Activated T-helper 2 cell treated with anti-CD3 and anti-CD28 coated beads, Interferon-gamma antibody, Interleukin-2, Interleukin-4, amounts not matched to agents 10 μg/mL and 5 μg/mL and 100 μg/mL, durations not matched to agents 14 hours and 24 hours and 36 hours (primary cell): ENCODE measurements at regions of chr6 and their contacts with region 1.

Region 1: DNA sequence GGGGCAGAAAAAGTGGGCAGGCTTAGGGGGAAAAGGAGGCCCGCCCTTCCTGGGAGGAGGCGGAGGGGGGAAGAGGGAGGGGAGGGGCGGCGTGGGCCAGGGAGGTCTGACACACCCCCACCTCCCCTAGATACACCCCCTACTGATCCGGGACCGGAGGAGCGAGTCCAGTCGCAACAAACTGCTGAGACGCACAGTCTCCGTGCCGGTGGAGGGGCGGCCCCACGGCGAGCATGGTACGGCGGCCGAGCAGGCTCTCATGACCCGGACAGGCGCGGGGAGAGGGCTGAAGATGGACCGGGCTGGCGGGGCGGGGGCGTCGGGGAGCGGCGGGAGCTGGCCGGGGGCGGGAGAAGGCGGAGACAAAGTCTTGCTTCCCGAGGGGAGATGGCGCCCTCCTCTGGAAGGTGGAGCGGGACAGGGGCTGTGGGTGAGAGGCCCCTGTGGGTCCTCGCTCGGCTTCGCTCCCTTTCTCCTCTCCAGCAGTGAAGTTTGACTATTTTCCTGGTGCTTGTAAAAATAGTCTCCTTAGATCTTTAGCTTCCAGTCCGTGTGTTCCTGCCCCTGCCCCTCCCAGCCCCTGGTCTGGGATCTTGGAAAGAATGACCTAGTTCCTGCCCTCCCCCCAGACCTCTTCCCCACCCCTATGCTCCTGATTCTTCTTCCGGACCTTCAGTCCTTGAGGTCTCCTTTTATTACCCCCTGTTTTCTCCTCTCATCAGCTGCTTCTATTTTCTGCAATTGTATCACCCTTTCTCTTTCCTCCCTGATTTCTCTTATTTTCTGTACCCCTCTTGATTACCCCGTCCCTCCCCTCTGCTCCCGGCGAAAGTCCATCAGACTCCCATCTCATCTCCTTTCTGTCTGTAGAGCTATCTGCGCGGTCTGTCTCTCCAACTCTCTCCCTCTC is 6.1 kb downstream of the SYNGAP1 start:
- DNase-seq: peak; percentile 73
- H3K4me3 Mint-ChIP-seq: peak overlapping the region; percentile 88
- H3K27ac Mint-ChIP-seq: peak overlapping the region; percentile 90
- H3K4me1 Mint-ChIP-seq: peaks cover 77% of the 10 kb centered on the region
- H3K27me3 Mint-ChIP-seq: no peaks in the 10 kb centered on the region

Region 2: GRCh38 chr6:32382757-32383156 is 1043.2 kb before region 1 on chr6:
- intact Hi-C with region 1: no loop called
- DNase-seq: no peak
- H3K4me3 Mint-ChIP-seq: no peak overlapping the region
- H3K27ac Mint-ChIP-seq: no peak overlapping the region
- H3K4me1 Mint-ChIP-seq: no peaks in the 10 kb centered on the region
- H3K27me3 Mint-ChIP-seq: peaks cover 30% of the 10 kb centered on the region

Region 3: DNA sequence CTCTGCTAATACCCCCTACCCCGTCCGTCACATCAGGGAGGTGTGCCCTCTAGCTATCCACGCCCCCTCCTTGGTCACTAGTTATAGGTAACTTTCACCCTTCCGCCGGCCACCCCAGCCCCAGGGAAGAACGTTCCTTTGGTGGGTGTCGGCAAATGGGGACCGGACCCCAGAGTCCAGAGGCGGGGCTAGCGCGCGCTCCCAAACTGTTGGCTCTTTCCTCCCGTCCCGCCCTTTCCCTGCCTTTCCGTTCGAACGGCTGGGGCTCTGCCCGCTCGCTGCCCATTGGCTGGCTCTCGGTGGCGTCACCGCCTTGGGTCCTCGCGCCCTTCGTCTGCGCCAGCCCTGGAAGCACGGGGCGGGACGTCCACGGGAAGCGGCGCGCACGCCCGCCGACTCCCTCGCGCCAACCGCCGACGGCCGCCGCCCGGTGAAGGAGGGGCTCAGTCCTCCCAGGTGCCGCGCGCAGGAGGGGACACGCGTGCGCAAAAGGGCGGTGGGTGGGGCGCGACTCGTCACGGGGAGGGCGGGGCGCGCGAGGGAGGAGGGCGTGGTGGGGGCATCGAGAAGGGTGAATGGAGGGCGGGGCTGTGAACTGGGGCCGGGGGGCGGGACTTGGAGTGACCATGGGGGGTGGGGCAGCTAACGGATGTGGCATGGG is 15.7 kb before region 1 on chr6:
- intact Hi-C with region 1: loop called (anchors 1 kb)
- DNase-seq: peak; percentile 98
- H3K4me3 Mint-ChIP-seq: peak overlapping the region; percentile 88
- H3K27ac Mint-ChIP-seq: peak overlapping the region; percentile 93
- H3K4me1 Mint-ChIP-seq: peaks cover 38% of the 10 kb centered on the region
- H3K27me3 Mint-ChIP-seq: no peaks in the 10 kb centered on the region

Region 4: DNA sequence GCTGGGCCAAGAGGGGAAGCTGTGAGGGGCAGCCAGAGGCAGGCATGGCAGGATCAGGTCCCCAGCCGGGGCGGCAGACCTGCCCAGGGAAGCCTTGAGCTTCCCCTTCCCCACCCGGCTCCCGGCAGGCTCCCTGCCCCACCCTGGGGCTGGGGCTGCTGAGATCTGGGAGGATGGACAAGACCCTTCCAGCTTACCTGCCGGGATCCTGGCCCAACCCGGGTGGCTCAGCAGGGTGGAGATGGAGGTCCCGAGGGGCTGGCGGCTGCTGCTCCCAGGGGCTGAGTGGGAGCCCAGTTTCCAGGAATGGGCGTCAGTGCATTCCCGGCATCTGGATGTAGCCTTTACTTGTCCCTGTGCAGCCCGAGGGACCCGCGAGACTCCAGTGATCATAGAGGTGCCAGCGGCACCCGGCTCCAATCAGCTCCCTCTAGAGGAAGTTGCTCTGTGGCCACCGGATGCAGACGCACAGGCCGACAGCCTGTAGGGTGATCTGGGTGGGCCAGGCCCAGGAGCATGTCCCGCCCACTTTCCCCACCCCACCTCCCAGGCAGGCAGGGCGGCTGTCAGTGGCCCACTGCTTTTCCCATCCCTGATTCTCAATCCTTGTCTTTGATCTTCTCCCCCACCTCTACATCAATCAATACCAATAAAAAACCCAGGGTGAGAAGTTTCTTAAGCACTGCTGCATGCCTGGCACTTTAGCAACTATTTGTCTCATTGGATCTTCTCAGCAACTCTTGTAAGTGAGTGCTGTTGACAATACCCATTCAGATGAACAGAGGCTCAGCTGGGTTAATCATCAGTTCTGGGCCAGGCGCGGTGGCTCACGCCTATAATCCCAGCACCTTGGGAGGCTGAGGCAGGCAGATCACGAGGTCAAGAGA is 154.1 kb after region 1 on chr6 and contains the start of gene BAK1:
- intact Hi-C with region 1: loop called (anchors 1 kb)
- DNase-seq: peak; percentile 81
- H3K4me3 Mint-ChIP-seq: peak within 1 kb of the TSS; percentile 96
- H3K27ac Mint-ChIP-seq: peak within 1 kb of the TSS; percentile 99
- H3K4me1 Mint-ChIP-seq: peaks cover 20% of the 10 kb centered on the region
- H3K27me3 Mint-ChIP-seq: no peaks in the 10 kb centered on the region
- total RNA-seq, gene BAK1: 53.2 and 53.4 TPM in 2 replicates